Ascending aorta (tissue), 2 donors: ENCODE measurements at regions of chr7 and their contacts with region 1.

Region 1: DNA sequence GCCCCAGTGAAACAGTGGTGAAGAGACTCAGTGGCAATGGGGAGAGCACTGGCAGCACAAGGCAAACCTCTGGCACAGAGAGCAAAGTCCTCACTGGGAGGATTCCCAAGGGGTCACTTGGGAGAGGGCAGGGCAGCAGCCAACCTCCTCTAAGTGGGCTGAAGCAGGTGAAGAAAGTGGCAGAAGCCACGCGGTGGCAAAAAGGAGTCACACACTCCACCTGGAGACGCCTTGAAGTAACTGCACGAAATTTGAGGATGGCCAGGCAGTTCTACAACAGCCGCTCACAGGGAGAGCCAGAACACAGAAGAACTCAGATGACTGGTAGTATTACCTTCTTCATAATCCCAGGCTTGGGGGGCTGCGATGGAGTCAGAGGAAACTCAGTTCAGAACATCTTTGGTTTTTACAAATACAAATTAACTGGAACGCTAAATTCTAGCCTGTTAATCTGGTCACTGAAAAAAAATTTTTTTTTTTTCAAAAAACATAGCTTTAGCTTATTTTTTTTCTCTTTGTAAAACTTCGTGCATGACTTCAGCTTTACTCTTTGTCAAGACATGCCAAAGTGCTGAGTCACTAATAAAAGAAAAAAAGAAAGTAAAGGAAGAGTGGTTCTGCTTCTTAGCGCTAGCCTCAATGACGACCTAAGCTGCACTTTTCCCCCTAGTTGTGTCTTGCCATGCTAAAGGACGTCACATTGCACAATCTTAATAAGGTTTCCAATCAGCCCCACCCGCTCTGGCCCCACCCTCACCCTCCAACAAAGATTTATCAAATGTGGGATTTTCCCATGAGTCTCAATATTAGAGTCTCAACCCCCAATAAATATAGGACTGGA is 435 bp upstream of the IL6 start:
- DNase-seq: peak in 1 of 2 donors; percentile 83
- H3K4me3 ChIP-seq: peak overlapping the region; percentile 57 to 61
- H3K27ac ChIP-seq: peak overlapping the region; percentile 60 to 83
- H3K4me1 ChIP-seq: peaks cover 5 to 36% of the 10 kb centered on the region in 2 donors
- H3K27me3 ChIP-seq: no peaks in the 10 kb centered on the region
- CTCF ChIP-seq: peak; percentile 21 to 55 (median 46)

Region 2: GRCh38 chr7:22377703-22378102 is 348.9 kb before region 1 on chr7:
- intact Hi-C with region 1: no loop called
- DNase-seq: no peak
- H3K4me3 ChIP-seq: no peak overlapping the region
- H3K27ac ChIP-seq: no peak overlapping the region
- H3K4me1 ChIP-seq: no peaks in the 10 kb centered on the region
- H3K27me3 ChIP-seq: no peaks in the 10 kb centered on the region
- CTCF ChIP-seq: no peak

Region 3: GRCh38 chr7:22577396-22578001 is 149.1 kb before region 1 on chr7:
- intact Hi-C with region 1: loop called (anchors 5 kb)
- DNase-seq: peak; percentile 21 to 87
- H3K4me3 ChIP-seq: no peak overlapping the region
- H3K27ac ChIP-seq: peak overlapping the region; percentile 79 to 89
- H3K4me1 ChIP-seq: peaks cover 7 to 31% of the 10 kb centered on the region in 2 donors
- H3K27me3 ChIP-seq: no peaks in the 10 kb centered on the region
- CTCF ChIP-seq: no peak

Region 4: GRCh38 chr7:22765609-22766008 is 39.0 kb after region 1 on chr7:
- intact Hi-C with region 1: no loop called
- DNase-seq: no peak
- H3K4me3 ChIP-seq: no peak overlapping the region
- H3K27ac ChIP-seq: no peak overlapping the region
- H3K4me1 ChIP-seq: no peaks in the 10 kb centered on the region
- H3K27me3 ChIP-seq: no peaks in the 10 kb centered on the region
- CTCF ChIP-seq: no peak

Region 5: DNA sequence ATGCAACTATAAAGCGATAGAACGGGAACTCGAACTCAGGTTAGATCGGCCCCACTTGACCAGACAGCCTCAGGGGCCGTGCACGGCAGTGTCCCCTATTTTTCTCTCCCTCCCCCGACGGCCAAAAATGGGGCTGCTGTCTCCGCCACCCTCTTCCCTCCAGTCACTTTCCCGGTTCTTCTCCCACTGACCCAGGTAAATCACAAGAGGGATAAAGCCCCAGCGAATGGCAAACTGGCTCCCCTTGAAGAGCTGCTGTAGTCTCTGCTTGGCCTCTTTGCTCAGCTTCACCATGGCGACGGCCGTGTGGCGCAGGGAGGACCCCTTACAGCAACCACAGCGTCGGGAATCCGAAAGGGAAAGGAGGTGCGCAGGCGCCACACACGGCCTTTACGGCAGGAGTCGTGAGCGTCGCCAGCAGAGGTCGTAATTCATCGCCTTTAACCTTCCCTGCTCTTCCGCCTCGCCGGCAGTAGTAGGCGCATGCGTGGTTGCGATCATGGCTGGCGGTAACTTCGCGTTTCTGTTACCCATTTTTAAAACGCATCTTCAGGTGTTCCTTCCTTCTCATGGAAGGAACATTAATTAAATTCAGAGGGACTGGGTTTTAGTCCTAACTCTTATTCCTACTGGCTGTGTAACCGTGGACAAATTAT is 96.0 kb after region 1 on chr7 and contains the start of gene TOMM7:
- intact Hi-C with region 1: loop called (anchors 5 kb)
- DNase-seq: peak; percentile 40 to 91
- H3K4me3 ChIP-seq: peak within 1 kb of the TSS; percentile 74 to 86
- H3K27ac ChIP-seq: peak within 1 kb of the TSS; percentile 67 to 80
- H3K4me1 ChIP-seq: peaks cover 3 to 9% of the 10 kb centered on the region in 2 donors
- H3K27me3 ChIP-seq: no peaks in the 10 kb centered on the region
- CTCF ChIP-seq: peak; percentile 24 to 55 (median 54)
- total RNA-seq, gene TOMM7: 65.1 TPM

Region 6: GRCh38 chr7:23013715-23014649 is 287.4 kb after region 1 on chr7 and contains the start of gene HYCC1:
- intact Hi-C with region 1: loop called (anchors 2 kb)
- DNase-seq: peak; percentile 97 to 100
- H3K4me3 ChIP-seq: peak within 1 kb of the TSS; percentile 76 to 98
- H3K27ac ChIP-seq: peak within 1 kb of the TSS; percentile 78 to 88
- H3K4me1 ChIP-seq: peaks cover 4 to 30% of the 10 kb centered on the region in 2 donors
- H3K27me3 ChIP-seq: no peaks in the 10 kb centered on the region
- CTCF ChIP-seq: peak; percentile 64 to 69 (median 69)
- total RNA-seq, gene HYCC1: 10.9 TPM

Region 7: DNA sequence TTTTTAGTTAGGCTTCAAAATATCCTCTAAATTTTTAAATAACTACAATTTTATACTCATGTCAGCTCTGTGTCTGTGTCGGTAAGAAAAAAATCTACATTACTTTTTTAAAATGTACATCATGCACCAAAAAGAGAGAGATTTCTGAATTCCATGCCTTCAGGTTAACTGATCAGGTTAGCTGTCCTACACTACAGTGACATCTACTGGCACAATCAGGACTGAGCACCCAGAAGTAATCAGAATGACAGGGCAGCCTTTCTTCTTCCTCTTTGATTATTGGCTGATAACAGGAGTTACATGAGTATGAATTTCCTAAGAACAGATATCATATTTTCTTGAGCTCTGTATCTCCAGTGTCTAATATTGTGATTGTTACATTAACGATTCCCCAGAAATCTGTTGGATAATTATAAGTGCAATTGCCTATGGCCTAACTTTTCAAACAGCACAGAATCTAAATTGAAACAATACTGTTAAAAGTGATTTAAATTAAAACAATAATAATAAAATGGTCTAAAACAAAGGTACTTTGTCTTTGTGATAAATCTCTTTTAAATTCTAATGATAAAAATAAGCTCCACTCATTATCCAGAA is 329.1 kb after region 1 on chr7:
- intact Hi-C with region 1: loop called (anchors 5 kb)
- DNase-seq: peak in 1 of 2 donors; percentile 68
- H3K4me3 ChIP-seq: no peak overlapping the region
- H3K27ac ChIP-seq: no peak overlapping the region
- H3K4me1 ChIP-seq: no peaks in the 10 kb centered on the region
- H3K27me3 ChIP-seq: no peaks in the 10 kb centered on the region
- CTCF ChIP-seq: peak; percentile 74 to 96 (median 88)

Region 8: GRCh38 chr7:23298885-23299769 is 572.6 kb after region 1 on chr7 and contains the start of gene MALSU1:
- intact Hi-C with region 1: loop called (anchors 10 kb)
- DNase-seq: peak; percentile 79 to 99
- H3K4me3 ChIP-seq: peak within 1 kb of the TSS; percentile 78 to 91
- H3K27ac ChIP-seq: peak within 1 kb of the TSS; percentile 75 to 79
- H3K4me1 ChIP-seq: peaks cover 8 to 17% of the 10 kb centered on the region in 2 donors
- H3K27me3 ChIP-seq: no peaks in the 10 kb centered on the region
- CTCF ChIP-seq: no peak
- total RNA-seq, gene MALSU1: 22.4 TPM